Cardiac septum (tissue), 1 donor: ENCODE measurements at regions of chr3 and their contacts with region 1.

Region 1: DNA sequence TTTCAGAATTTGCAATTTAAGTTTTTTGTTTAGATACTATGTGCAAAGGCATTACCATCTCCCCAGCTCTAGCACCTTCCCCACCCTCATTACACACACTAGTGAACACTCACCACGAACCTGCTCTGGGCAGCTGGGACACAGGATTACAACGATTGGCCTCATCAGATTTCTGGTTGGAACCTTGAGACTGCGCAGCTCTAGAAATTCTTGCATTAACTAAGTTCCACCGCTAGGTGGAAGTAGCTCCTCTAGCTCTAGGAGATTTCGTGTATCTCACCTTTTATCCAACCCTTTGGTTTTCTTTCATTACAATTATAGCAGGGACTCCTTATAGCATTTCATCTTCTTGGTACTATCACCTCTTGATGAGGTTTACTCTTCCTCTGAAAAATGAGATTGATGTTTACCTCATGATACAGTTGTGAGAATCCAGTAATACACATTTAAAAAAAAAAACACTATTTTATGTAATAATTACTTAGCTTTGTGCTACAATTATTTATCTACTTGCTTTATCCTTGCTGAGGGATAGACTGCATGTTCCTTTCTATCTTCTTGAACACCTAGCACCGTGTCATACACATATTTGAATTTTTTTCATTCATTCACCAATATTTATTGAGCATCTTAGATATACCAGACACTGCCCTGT is 28.7 kb upstream of the PLOD2 start:
- DNase-seq: no peak

Region 2: GRCh38 chr3:146166450-146167225 is 23.0 kb before region 1 on chr3:
- intact Hi-C with region 1: no loop called
- DNase-seq: no peak

Region 3: GRCh38 chr3:146326670-146327543 is 137.3 kb after region 1 on chr3:
- intact Hi-C with region 1: loop called (anchors 2 kb)
- DNase-seq: no peak